GM12878 (cell line): ENCODE measurements at regions of chr7 and their contacts with region 1.

Region 1: GRCh38 chr7:69825113-69825616 is 226.9 kb downstream of the AUTS2 start:
- DNase-seq: no peak
- ATAC-seq: peak; percentile 56
- H3K4me3 ChIP-seq: peak overlapping the region; percentile 68; the same call in 1 of the 2 replicates
- H3K27ac ChIP-seq: peak overlapping the region; percentile 89
- H3K4me1 ChIP-seq: peaks cover 38% of the 10 kb centered on the region
- H3K27me3 ChIP-seq: no peaks in the 10 kb centered on the region
- CTCF ChIP-seq: peak in 1 of 3 experiments; percentile 56; a peak in 2 of 6 replicates
- EP300 ChIP-seq: no peak
- POLR2A ChIP-seq: no peak
- RAD21 ChIP-seq: peak; percentile 69

Region 2: GRCh38 chr7:69403169-69403568 is 422.0 kb before region 1 on chr7:
- CTCF ChIA-PET with region 1: interaction called, 4 read pairs
- POLR2A ChIA-PET with region 1: no interaction called
- RAD21 ChIA-PET with region 1: no interaction called
- SMC1A ChIA-PET with region 1: interaction called, 3 read pairs
- in situ Hi-C with region 1: no loop called
- intact Hi-C with region 1: loop called (anchors 5 kb)
- DNase-seq: no peak
- ATAC-seq: peak; percentile 95
- H3K4me3 ChIP-seq: no peak overlapping the region
- H3K27ac ChIP-seq: no peak overlapping the region
- H3K4me1 ChIP-seq: no peaks in the 10 kb centered on the region
- H3K27me3 ChIP-seq: no peaks in the 10 kb centered on the region
- CTCF ChIP-seq: peak; percentile 39 to 47 (median 43); a peak in 5 of 6 replicates
- EP300 ChIP-seq: no peak
- POLR2A ChIP-seq: no peak
- RAD21 ChIP-seq: peak; percentile 74

Region 3: DNA sequence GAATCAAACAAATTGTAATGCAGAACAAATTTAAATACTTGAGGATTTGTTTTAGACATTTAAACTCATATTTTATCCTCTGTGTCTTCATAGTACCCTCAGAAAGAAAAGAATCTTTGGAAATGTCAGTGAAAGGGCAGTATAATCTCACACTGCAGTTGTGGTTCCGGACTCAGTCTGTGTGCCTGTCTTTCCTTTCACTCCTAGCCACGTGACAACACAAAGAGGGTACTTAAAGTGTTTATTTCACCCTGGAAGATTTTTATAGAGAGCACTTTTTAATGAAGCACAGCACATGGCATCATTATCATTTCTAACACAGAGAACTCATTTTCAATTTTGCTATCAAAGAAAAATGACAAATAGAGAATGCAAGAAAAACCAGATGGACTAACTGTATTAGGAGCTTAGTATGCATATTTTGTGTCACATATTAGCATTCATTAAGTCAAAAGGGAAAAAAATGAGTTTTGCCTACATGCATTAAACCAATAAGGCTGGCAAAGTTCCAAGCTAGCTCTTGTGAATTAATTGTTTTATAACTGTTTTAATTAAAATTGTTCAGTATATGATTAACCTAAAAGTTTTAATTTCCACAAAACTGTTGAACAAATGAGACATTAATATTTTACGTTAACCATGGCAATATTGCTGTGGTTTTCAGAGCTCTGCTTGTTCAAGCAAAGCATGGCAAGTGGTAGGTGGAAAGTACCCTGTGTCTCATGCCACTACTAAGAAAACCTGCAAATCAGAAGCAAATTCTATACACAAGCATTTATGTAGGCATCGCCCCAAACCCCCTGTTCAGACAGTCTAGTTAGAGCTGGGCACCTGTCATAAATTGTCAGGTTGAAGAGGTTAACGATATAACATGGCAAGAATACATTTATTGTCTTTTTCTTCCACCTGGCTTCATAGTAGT is 161.0 kb before region 1 on chr7:
- CTCF ChIA-PET with region 1: interaction called, 4 read pairs
- POLR2A ChIA-PET with region 1: interaction called, 3 read pairs
- RAD21 ChIA-PET with region 1: interaction called, 3 read pairs
- SMC1A ChIA-PET with region 1: interaction called, 16 read pairs
- in situ Hi-C with region 1: no loop called
- intact Hi-C with region 1: no loop called
- DNase-seq: no peak
- ATAC-seq: peak; percentile 81
- H3K4me3 ChIP-seq: no peak overlapping the region
- H3K27ac ChIP-seq: peak overlapping the region; percentile 6; the same call in 1 of the 2 replicates
- H3K4me1 ChIP-seq: peaks cover 33% of the 10 kb centered on the region
- H3K27me3 ChIP-seq: no peaks in the 10 kb centered on the region
- CTCF ChIP-seq: no peak
- EP300 ChIP-seq: peak in 1 of 2 experiments; percentile 13; a peak in 1 of 4 replicates
- POLR2A ChIP-seq: no peak
- RAD21 ChIP-seq: no peak

Region 4: GRCh38 chr7:69837387-69838068 is 12.4 kb after region 1 on chr7:
- CTCF ChIA-PET with region 1: interaction called, 16 read pairs
- POLR2A ChIA-PET with region 1: interaction called, 4 read pairs
- RAD21 ChIA-PET with region 1: interaction called, 40 read pairs
- SMC1A ChIA-PET with region 1: interaction called, 145 read pairs
- in situ Hi-C with region 1: no loop called
- intact Hi-C with region 1: loop called (anchors 2 kb)
- DNase-seq: no peak
- ATAC-seq: no peak
- H3K4me3 ChIP-seq: no peak overlapping the region
- H3K27ac ChIP-seq: no peak overlapping the region
- H3K4me1 ChIP-seq: peaks cover 29% of the 10 kb centered on the region
- H3K27me3 ChIP-seq: no peaks in the 10 kb centered on the region
- CTCF ChIP-seq: no peak
- EP300 ChIP-seq: no peak
- POLR2A ChIP-seq: no peak
- RAD21 ChIP-seq: no peak

Region 5: DNA sequence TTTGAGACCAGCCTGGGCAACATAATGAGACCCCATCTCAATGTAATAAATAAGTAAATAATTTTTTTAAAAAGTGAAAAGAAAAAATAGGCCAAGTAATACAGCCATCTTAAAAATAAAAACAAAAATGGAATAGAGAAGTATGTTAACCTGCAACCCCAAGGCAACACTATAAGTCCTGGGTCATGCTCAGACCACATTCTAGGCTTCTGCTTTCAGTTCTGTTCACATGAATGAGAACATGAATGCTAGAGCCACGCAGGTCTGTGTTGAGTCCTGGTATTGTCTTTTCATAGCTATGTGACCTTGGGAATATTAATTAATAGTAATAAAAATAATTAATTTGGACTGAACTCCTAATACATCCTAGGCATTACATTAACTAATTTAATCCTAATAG is 57.1 kb after region 1 on chr7:
- CTCF ChIA-PET with region 1: no interaction called
- POLR2A ChIA-PET with region 1: interaction called, 3 read pairs
- RAD21 ChIA-PET with region 1: interaction called, 16 read pairs
- SMC1A ChIA-PET with region 1: interaction called, 8 read pairs
- in situ Hi-C with region 1: no loop called
- intact Hi-C with region 1: no loop called
- DNase-seq: no peak
- ATAC-seq: peak; percentile 84
- H3K4me3 ChIP-seq: no peak overlapping the region
- H3K27ac ChIP-seq: peak overlapping the region; percentile 11; the same call in 1 of the 2 replicates
- H3K4me1 ChIP-seq: peaks cover 22% of the 10 kb centered on the region
- H3K27me3 ChIP-seq: no peaks in the 10 kb centered on the region
- CTCF ChIP-seq: no peak
- EP300 ChIP-seq: no peak
- POLR2A ChIP-seq: no peak
- RAD21 ChIP-seq: no peak

Region 6: GRCh38 chr7:69932034-69932628 is 107.0 kb after region 1 on chr7:
- CTCF ChIA-PET with region 1: interaction called, 18 read pairs
- POLR2A ChIA-PET with region 1: no interaction called
- RAD21 ChIA-PET with region 1: interaction called, 9 read pairs
- SMC1A ChIA-PET with region 1: interaction called, 5 read pairs
- in situ Hi-C with region 1: no loop called
- intact Hi-C with region 1: no loop called
- DNase-seq: no peak
- ATAC-seq: peak; percentile 57
- H3K4me3 ChIP-seq: no peak overlapping the region
- H3K27ac ChIP-seq: no peak overlapping the region
- H3K4me1 ChIP-seq: no peaks in the 10 kb centered on the region
- H3K27me3 ChIP-seq: no peaks in the 10 kb centered on the region
- CTCF ChIP-seq: peak; percentile 48 to 65 (median 60)
- EP300 ChIP-seq: no peak
- POLR2A ChIP-seq: no peak
- RAD21 ChIP-seq: peak; percentile 95